Breast epithelium (tissue), 4 donors: ENCODE measurements at regions of chr2 and their contacts with region 1.

Region 1: DNA sequence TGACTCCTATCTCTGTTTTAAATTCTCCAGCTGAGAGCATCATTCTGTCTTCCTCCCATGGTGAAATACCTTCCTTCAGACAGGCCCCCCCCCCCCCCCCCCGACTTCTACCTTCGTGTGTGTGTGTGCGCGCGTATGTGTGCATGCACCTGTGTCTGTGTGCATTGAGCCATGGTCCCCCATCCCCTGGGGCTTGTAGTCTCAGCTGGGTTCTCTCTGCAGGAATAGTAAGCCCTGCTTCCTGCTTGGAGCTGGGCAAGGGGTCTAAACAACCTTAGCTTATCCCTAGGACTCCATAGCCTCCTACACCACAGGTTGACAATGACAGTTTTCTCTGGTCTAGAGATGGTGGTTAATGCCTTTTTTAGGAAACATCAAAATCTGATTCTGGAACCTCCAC is 427.5 kb upstream of the KLHL29 start:
- DNase-seq: no peak
- H3K4me3 ChIP-seq: no peak overlapping the region
- H3K27ac ChIP-seq: no peak overlapping the region
- H3K4me1 ChIP-seq: no peaks in the 10 kb centered on the region
- H3K27me3 ChIP-seq: no peaks in the 10 kb centered on the region
- CTCF ChIP-seq: no peak
- POLR2A ChIP-seq: no peak

Region 2: DNA sequence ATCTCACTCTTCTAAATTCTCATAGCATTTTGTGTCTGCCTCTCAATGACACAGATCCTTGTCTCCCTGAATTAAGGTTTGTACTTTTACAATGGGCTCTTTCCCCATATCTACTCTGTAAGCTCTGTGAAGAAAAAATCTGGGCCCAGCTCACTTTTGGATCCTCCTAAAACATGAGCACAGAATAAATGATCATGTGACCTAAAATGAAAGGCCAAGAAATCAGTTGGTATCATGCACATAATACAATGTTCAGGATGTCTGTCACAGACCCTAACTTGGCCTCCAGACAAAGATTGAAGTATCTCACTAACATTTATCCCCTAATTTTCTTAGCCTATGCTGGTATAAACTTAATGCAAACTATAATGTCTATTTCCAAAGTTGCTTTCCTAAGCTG is 320.8 kb before region 1 on chr2:
- intact Hi-C with region 1: loop called (anchors 5 kb)
- DNase-seq: no peak
- H3K4me3 ChIP-seq: no peak overlapping the region
- H3K27ac ChIP-seq: no peak overlapping the region
- H3K4me1 ChIP-seq: no peaks in the 10 kb centered on the region
- H3K27me3 ChIP-seq: no peaks in the 10 kb centered on the region
- CTCF ChIP-seq: no peak
- POLR2A ChIP-seq: no peak

Region 3: GRCh38 chr2:23465936-23466335 is 508.5 kb after region 1 on chr2:
- intact Hi-C with region 1: no loop called
- DNase-seq: no peak
- H3K4me3 ChIP-seq: no peak overlapping the region
- H3K27ac ChIP-seq: no peak overlapping the region
- H3K4me1 ChIP-seq: no peaks in the 10 kb centered on the region
- H3K27me3 ChIP-seq: peaks cover 0 to 7% of the 10 kb centered on the region in 2 donors
- CTCF ChIP-seq: no peak
- POLR2A ChIP-seq: no peak